Psoas muscle (tissue), 8 donors: ENCODE measurements at regions of chr14 and their contacts with region 1.

Region 1: GRCh38 chr14:61761959-61762786 is at the start of gene SNAPC1:
- DNase-seq: peak; percentile 97 to 98
- ATAC-seq: peak; percentile 97 to 99 (median 99)
- H3K4me3 ChIP-seq: peak within 1 kb of the TSS; percentile 79
- H3K27ac ChIP-seq: peak within 1 kb of the TSS; percentile 89
- H3K4me1 ChIP-seq: peaks cover 31% of the 10 kb centered on the region
- H3K27me3 ChIP-seq: no peaks in the 10 kb centered on the region
- CTCF ChIP-seq: no peak
- total RNA-seq, gene SNAPC1: 3.6 to 5.2 (median 4.8) TPM

Region 2: GRCh38 chr14:61296719-61297502 is 465.3 kb before region 1 on chr14:
- intact Hi-C with region 1: loop called in 1 of 2 experiments (anchors 10 kb)
- DNase-seq: no peak
- ATAC-seq: peak in 3 of 4 donors; percentile 41 to 80 (median 75)
- H3K4me3 ChIP-seq: no peak overlapping the region
- H3K27ac ChIP-seq: no peak overlapping the region
- H3K4me1 ChIP-seq: peaks cover 15% of the 10 kb centered on the region
- H3K27me3 ChIP-seq: no peaks in the 10 kb centered on the region
- CTCF ChIP-seq: peak; percentile 73

Region 3: GRCh38 chr14:61475316-61475715 is 286.9 kb before region 1 on chr14:
- intact Hi-C with region 1: loop called in 1 of 2 experiments (anchors 5 kb)
- DNase-seq: no peak
- ATAC-seq: peak in 3 of 4 donors; percentile 47 to 73 (median 52)
- H3K4me3 ChIP-seq: no peak overlapping the region
- H3K27ac ChIP-seq: peak overlapping the region; percentile 81
- H3K4me1 ChIP-seq: peaks cover 45% of the 10 kb centered on the region
- H3K27me3 ChIP-seq: no peaks in the 10 kb centered on the region
- CTCF ChIP-seq: peak; percentile 79

Region 4: DNA sequence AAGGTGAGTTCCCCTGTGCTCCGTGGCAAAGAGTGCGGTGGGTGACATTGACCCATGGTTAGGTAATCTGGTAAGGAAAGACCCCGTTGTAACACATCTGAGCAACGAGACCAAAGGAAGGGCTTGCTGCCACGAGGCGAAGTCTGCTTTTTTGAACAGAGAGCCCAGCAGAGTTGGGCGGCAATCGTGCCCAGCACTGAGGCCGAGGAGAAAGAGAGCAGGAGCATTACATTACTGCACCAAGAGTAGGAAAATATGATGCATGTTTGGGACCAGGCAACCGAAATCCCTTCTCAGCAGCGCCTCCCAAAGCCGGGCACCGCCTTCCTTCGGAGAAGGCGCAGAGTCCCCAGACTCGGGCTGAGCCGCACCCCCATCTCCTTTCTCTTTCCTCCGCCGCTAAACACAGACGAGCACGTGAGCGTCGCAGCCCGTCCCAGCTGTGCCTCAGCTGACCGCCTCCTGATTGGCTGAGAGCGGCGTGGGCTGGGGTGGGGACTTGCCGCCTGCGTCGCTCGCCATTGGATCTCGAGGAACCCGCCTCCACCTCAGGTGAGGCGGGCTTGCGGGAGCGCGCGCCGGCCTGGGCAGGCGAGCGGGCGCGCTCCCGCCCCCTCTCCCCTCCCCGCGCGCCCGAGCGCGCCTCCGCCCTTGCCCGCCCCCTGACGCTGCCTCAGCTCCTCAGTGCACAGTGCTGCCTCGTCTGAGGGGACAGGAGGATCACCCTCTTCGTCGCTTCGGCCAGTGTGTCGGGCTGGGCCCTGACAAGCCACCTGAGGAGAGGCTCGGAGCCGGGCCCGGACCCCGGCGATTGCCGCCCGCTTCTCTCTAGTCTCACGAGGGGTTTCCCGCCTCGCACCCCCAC is 67.1 kb before region 1 on chr14 and contains the start of gene HIF1A:
- intact Hi-C with region 1: loop called in 1 of 2 experiments (anchors 5 kb)
- DNase-seq: peak; percentile 95 to 98
- ATAC-seq: peak; percentile 97 to 99 (median 98)
- H3K4me3 ChIP-seq: peak within 1 kb of the TSS; percentile 96
- H3K27ac ChIP-seq: peak within 1 kb of the TSS; percentile 93
- H3K4me1 ChIP-seq: peaks cover 34% of the 10 kb centered on the region
- H3K27me3 ChIP-seq: no peaks in the 10 kb centered on the region
- CTCF ChIP-seq: no peak
- total RNA-seq, gene HIF1A: 16.5 to 32.4 (median 24.5) TPM